Mammary epithelial cell (primary cell): ENCODE measurements at regions of chr5 and their contacts with region 1.

Region 1: DNA sequence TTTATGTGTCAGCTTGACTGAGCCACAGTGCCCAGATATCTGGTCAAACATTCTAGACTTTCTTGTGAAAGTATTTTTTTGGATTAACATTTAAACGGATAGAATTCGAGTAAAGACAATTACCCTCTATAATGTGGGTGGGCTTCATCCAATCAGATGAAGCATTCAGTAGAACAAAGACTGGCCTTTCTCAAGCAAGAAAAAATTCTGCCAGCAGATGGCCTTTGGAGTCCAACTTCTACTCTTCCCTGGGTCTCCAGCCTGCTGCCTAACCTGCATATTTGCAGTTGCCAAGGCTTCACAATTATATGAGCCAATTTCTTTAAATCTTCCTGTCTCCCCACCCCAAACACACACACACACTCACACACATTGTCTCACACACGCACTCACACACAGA is 86.4 kb downstream of the MED10 start:
- DNase-seq: peak; percentile 2
- H3K4me3 ChIP-seq: no peak overlapping the region
- H3K27ac ChIP-seq: no peak overlapping the region
- H3K4me1 ChIP-seq: no peaks in the 10 kb centered on the region
- H3K27me3 ChIP-seq: no peaks in the 10 kb centered on the region
- CTCF ChIP-seq: peak in 1 of 2 donors; percentile 45

Region 2: GRCh38 chr5:6435356-6435755 is 143.4 kb after region 1 on chr5:
- CTCF ChIA-PET with region 1: no interaction called
- dilution Hi-C with region 1: no loop called
- in situ Hi-C with region 1: no loop called
- intact Hi-C with region 1: no loop called
- DNase-seq: no peak
- H3K4me3 ChIP-seq: no peak overlapping the region
- H3K27ac ChIP-seq: no peak overlapping the region
- H3K4me1 ChIP-seq: peaks cover 2% of the 10 kb centered on the region
- H3K27me3 ChIP-seq: peaks cover 1% of the 10 kb centered on the region
- CTCF ChIP-seq: peak in 1 of 2 donors; percentile 26

Region 3: DNA sequence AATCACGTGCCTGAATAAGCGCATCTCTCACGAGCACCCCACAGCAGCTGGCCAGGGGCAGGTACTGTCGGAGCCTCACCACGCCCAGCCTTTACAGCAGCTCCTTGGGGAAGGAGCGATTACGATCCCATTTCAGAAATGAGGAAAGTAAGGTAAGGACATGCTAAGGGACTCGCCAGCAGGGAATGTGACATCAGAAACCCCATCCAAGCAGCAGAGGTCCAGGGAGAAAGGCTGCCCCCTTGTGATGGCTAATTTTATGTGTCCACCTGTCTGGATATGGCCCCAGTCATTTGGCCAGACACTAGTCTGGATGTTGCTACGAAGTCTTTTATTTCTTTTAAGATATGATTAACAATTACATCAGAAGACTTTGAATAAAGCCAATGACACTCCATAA is 233.9 kb after region 1 on chr5:
- CTCF ChIA-PET with region 1: no interaction called
- dilution Hi-C with region 1: no loop called
- in situ Hi-C with region 1: no loop called
- intact Hi-C with region 1: loop called (anchors 1 kb)
- DNase-seq: no peak
- H3K4me3 ChIP-seq: no peak overlapping the region
- H3K27ac ChIP-seq: no peak overlapping the region
- H3K4me1 ChIP-seq: no peaks in the 10 kb centered on the region
- H3K27me3 ChIP-seq: no peaks in the 10 kb centered on the region
- CTCF ChIP-seq: peak; percentile 6 to 41

Region 4: DNA sequence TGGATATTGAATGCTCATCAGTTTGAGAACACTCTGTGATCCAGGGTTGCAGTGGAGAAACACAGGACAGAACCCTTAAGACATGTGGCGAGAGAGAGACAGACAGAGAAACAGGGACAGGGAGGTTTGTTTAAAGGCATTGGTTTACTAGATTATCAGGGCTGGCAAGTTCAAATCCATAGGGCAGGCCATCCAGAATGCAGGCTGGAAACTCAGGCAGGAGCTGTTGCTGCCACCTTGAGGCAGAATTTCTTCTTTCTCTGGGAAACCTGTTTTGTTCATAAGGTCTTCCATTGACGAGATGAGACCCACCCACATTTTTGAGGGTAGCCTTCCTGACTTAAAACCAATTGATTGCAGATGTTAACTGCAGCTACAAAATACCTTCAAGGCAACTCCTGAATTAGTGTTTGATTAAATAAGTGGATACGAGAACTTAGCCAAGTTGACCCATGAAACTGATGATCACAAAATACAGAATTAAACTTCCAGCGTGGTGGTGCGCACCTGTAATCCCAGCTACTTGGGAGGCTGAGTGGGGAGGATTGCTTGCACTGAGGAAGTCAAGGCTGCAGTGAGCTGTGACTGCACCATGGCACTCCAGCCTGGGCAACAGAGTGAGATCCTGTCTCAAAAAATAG is 285.0 kb after region 1 on chr5:
- CTCF ChIA-PET with region 1: no interaction called
- dilution Hi-C with region 1: no loop called
- in situ Hi-C with region 1: loop called in 1 of 2 experiments (anchors 10 kb)
- intact Hi-C with region 1: loop called (anchors 1 kb)
- DNase-seq: peak; percentile 40
- H3K4me3 ChIP-seq: no peak overlapping the region
- H3K27ac ChIP-seq: no peak overlapping the region
- H3K4me1 ChIP-seq: no peaks in the 10 kb centered on the region
- H3K27me3 ChIP-seq: no peaks in the 10 kb centered on the region
- CTCF ChIP-seq: peak; percentile 56 to 74

Region 5: GRCh38 chr5:6745706-6746222 is 453.8 kb after region 1 on chr5:
- CTCF ChIA-PET with region 1: no interaction called
- dilution Hi-C with region 1: no loop called
- in situ Hi-C with region 1: no loop called
- intact Hi-C with region 1: loop called (anchors 2 kb)
- DNase-seq: peak; percentile 44
- H3K4me3 ChIP-seq: no peak overlapping the region
- H3K27ac ChIP-seq: no peak overlapping the region
- H3K4me1 ChIP-seq: no peaks in the 10 kb centered on the region
- H3K27me3 ChIP-seq: no peaks in the 10 kb centered on the region
- CTCF ChIP-seq: peak; percentile 77 to 79